Mammary epithelial cell (primary cell): ENCODE measurements at regions of chr10 and their contacts with region 1.

Region 1: DNA sequence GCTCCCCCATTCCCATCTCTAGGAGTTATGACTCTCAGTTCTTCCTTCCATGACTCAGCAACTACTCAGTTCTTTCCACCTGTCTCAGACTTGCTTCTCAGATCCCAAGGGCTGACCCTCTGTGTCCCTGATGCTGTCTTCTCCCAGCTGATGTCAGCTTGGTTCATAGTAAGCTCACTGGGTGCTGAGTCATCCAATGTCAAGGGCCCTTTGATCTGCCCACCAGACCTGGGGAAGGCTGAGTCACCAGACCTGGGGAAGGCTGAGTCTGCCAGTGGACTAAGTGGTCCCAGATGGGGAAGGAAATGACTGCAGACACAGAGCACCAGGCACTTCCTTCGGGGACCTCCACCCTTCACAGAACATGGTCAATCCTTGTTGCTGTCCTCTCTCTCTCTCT is 76.1 kb upstream of the ZEB1 start:
- DNase-seq: peak; percentile 82
- H3K4me3 ChIP-seq: no peak overlapping the region
- H3K27ac ChIP-seq: no peak overlapping the region
- H3K4me1 ChIP-seq: no peaks in the 10 kb centered on the region
- H3K27me3 ChIP-seq: no peaks in the 10 kb centered on the region
- CTCF ChIP-seq: no peak

Region 2: DNA sequence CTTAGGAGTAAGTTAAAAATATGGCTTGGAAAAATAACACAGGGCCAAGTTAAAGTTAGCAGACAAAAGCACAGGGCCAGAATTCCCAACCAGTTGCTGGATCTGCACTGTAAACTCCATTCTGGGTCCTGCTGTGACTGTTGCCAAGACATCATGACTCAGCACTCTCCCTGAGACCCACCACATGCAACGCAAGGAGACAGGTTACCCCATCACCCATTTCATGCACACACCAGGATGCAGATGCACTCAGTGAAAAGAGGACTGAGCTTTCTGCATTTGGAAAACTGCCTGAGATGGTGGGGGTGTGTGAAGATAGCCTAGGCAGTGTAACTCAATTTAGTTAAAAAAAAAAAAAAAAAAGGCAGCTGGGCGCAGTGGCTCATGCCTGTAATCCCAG is 113.6 kb before region 1 on chr10:
- CTCF ChIA-PET with region 1: no interaction called
- dilution Hi-C with region 1: loop called (anchors 5 kb)
- in situ Hi-C with region 1: no loop called
- intact Hi-C with region 1: no loop called
- DNase-seq: no peak
- H3K4me3 ChIP-seq: no peak overlapping the region
- H3K27ac ChIP-seq: no peak overlapping the region
- H3K4me1 ChIP-seq: peaks cover 4% of the 10 kb centered on the region
- H3K27me3 ChIP-seq: no peaks in the 10 kb centered on the region
- CTCF ChIP-seq: no peak